Activated CD4-positive, alpha-beta T cell treated with anti-CD3 and anti-CD28 coated beads, Interleukin-2, amount 10 ng/mL, durations not matched to agents 24 days and 14 days (primary cell): ENCODE measurements at regions of chr4 and their contacts with region 1.

Region 1: DNA sequence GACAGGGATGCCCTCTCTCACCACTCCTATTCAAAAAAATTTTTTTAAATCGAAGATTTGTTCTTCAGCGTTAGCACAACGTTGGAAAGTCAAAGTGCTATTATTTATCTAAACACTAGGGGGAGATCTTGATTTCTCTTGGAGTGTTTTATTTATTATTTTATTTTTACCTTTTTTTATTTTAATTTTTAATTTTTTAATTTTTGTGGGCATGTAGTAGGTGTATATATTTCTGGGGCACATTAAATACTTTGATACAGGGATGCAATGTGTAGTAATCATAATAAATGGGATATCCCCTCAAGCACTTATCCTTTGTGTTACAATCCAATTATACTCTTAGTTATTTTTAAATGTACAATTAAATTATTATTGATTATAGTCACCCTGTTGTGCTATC is 37.4 kb upstream of the SLC10A4 start:
- DNase-seq: no peak
- H3K4me3 Mint-ChIP-seq: no peak overlapping the region
- H3K27ac Mint-ChIP-seq: no peak overlapping the region
- H3K4me1 Mint-ChIP-seq: no peaks in the 10 kb centered on the region
- H3K27me3 Mint-ChIP-seq: peaks cover 4% of the 10 kb centered on the region

Region 2: GRCh38 chr4:48546336-48546735 is 100.6 kb after region 1 on chr4:
- intact Hi-C with region 1: loop called (anchors 2 kb)
- DNase-seq: peak; percentile 80
- H3K4me3 Mint-ChIP-seq: no peak overlapping the region
- H3K27ac Mint-ChIP-seq: no peak overlapping the region
- H3K4me1 Mint-ChIP-seq: peaks cover 5% of the 10 kb centered on the region
- H3K27me3 Mint-ChIP-seq: no peaks in the 10 kb centered on the region